A673 (cell line): ENCODE measurements at regions of chr10 and their contacts with region 1.

Region 1: DNA sequence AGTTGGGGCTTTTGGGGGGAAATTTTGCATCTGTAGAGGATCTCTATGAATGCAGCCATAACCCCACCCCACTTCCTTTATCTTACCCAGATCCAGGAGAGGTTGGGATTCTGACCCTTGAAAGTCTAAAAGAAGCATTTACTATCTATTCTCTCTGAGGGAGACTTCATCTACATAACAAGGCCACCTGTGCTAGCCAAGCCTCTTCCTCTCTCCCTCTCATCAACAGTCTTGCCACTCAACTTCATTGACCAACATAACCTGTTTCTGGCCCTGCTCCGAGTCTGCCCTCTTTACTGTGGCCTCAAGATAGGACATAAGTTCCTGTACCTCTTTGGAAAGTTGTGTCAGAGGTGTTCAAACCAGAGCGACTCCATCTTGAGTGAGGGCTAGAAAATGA is 19.4 kb downstream of the TUBAL3 start:
- DNase-seq: no peak
- H3K4me3 ChIP-seq: no peak overlapping the region
- H3K27ac ChIP-seq: no peak overlapping the region
- H3K4me1 ChIP-seq: no peaks in the 10 kb centered on the region
- H3K27me3 ChIP-seq: no peaks in the 10 kb centered on the region
- CTCF ChIP-seq: no peak

Region 2: DNA sequence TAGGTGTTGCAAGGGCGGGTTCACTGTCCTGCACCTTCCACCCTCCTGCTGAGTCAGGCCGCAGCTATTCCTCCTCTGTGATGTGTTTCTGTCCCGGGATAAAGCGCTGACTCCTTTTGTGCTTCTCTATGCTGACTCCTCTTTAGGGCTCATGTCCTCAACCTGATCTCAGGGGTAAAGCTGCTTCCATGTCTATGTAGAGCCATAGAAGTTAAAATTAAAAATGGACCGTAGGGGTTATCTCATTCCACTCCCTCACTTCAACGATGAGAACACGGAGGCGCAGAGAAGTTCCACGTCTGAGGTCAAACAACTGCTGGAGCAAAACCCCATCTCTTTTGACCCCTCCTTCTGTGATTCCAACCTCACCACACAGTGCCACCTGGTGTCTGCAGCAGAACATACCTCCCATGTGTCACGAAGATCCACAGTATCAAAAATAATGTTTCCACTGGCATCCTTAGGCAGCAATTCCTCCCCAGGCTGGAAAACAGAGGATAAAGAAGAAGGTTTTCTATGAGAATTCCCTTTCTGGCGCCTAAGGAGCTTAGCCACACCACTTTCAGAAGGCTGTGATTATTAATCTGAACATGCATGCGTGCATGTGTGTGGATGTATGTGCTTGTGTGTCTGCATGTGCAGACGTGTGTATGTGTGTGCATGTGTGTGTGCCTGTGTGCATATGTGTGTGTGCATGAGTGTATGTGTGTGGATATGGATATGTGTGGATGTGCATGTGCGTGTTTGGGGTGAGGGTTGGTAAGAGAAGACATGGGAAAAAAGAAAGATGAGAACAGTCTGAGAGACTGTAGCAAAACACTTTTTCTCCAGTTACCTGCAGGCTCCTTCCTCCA is 101.7 kb before region 1 on chr10:
- CTCF ChIA-PET with region 1: no interaction called
- POLR2A ChIA-PET with region 1: no interaction called
- intact Hi-C with region 1: loop called (anchors 5 kb)
- DNase-seq: peak; percentile 89
- H3K4me3 ChIP-seq: no peak overlapping the region
- H3K27ac ChIP-seq: peak overlapping the region; percentile 73
- H3K4me1 ChIP-seq: peaks cover 23% of the 10 kb centered on the region
- H3K27me3 ChIP-seq: no peaks in the 10 kb centered on the region
- CTCF ChIP-seq: peak; percentile 83

Region 3: DNA sequence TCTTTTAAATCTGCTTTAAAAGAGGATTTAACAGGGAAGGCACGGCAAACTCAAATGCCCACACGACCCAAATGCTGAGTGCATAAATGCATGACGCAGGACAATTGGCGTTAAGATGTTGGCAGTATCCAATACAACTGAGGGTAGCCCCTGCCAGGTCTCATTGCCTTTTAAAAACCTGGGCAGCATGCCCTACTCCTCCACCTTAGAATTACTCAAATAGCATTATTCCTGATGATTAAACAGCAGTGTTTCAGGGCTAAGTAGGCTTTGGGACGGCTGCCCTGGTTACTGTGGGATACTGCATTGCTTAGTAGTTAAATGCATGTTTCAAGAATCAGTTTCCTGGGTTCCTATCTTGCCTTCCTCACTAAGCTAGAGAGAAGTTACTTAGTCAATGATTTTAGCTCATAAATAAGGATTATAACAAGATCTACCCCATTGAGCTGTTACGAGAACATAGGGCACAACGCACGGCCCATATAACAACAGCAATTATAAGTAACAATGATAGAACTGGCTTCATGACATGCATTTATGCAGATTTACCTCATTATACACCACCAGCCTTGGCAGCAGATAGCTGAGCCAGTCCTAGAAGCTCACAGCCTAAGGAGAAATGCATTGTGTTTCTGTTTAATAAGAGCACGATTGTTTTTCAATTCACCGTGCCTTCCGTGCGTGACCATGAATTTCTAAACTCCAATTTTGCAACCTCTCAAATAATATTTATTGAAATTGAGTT is 11.5 kb after region 1 on chr10:
- CTCF ChIA-PET with region 1: interaction called, 12 read pairs
- POLR2A ChIA-PET with region 1: no interaction called
- intact Hi-C with region 1: no loop called
- DNase-seq: peak; percentile 40
- H3K4me3 ChIP-seq: peak overlapping the region; percentile 19
- H3K27ac ChIP-seq: no peak overlapping the region
- H3K4me1 ChIP-seq: peaks cover 5% of the 10 kb centered on the region
- H3K27me3 ChIP-seq: no peaks in the 10 kb centered on the region
- CTCF ChIP-seq: no peak

Region 4: GRCh38 chr10:6694447-6695140 is 1309.4 kb after region 1 on chr10:
- CTCF ChIA-PET with region 1: no interaction called
- POLR2A ChIA-PET with region 1: no interaction called
- intact Hi-C with region 1: no loop called
- DNase-seq: peak; percentile 21
- H3K4me3 ChIP-seq: no peak overlapping the region
- H3K27ac ChIP-seq: no peak overlapping the region
- H3K4me1 ChIP-seq: no peaks in the 10 kb centered on the region
- H3K27me3 ChIP-seq: peaks cover 8% of the 10 kb centered on the region
- CTCF ChIP-seq: no peak